Ascending aorta (tissue), 2 donors: ENCODE measurements at regions of chr9 and their contacts with region 1.

Region 1: GRCh38 chr9:127214421-127215267 is 49.9 kb upstream of the GARNL3 start:
- DNase-seq: peak in 1 of 2 donors; percentile 78
- H3K4me3 ChIP-seq: no peak overlapping the region
- H3K27ac ChIP-seq: no peak overlapping the region
- H3K4me1 ChIP-seq: no peaks in the 10 kb centered on the region
- H3K27me3 ChIP-seq: no peaks in the 10 kb centered on the region
- CTCF ChIP-seq: peak; percentile 66 to 79 (median 69)

Region 2: DNA sequence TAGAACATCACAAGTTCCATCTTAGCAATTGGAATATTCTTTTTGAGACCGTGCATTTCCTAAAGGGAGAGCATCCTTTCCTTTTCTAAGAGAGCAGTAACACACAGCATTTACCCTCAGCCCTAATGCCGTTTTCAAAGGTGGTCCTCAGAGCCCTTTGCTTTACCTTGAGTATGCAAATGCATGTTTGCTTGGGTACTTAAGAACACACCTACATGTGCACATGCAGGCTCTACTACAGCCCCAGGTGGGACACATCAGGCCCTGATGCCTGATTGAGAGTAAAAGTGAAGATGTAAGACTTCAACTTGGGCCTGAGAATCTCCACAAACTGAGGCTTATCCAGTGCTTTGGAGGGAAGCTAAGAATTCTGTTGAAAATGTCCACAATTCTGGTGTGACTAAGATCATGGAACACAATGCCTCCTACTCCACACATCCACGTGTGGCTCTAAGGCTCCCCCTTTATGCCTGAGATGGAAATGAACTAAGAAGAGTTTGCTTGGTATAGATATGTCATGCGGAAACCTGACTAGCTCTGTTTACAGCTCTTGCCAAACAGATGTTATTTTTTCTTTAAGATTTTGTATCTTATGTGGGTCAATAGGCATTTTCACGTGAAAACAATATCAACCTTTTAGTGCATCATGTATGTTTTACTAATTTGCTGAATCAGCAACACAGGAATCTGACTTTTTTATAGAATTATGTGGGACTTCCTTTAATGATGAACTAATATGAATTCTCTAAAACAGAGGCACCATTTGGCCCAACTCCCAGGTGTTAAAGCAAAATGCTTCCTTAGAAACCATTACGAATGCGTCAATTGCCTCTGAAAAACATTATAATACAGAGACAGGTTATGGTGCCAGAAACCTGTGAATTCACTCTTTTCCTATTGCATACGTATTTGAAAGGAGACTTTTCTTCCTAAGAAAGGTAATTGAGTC is 133.5 kb after region 1 on chr9:
- intact Hi-C with region 1: loop called (anchors 1 kb)
- DNase-seq: no peak
- H3K4me3 ChIP-seq: no peak overlapping the region
- H3K27ac ChIP-seq: no peak overlapping the region
- H3K4me1 ChIP-seq: no peaks in the 10 kb centered on the region
- H3K27me3 ChIP-seq: no peaks in the 10 kb centered on the region
- CTCF ChIP-seq: peak; percentile 23 to 58 (median 54)